ENCODE measurements at regions of chr11 and their contacts with region 1.

Region 1: GRCh38 chr11:96342961-96343711 is at the start of gene MAML2:
- DNase-seq: peak; percentile 95
- ATAC-seq: peak; percentile 83
- H3K4me3 Mint-ChIP-seq: peak within 1 kb of the TSS; percentile 91
- H3K27ac Mint-ChIP-seq: peak within 1 kb of the TSS; percentile 95
- H3K4me1 Mint-ChIP-seq: peaks cover 31% of the 10 kb centered on the region
- H3K27me3 Mint-ChIP-seq: no peaks in the 10 kb centered on the region
- total RNA-seq, gene MAML2: 14.7 to 15.5 TPM

Region 2: GRCh38 chr11:95835768-95836488 is 507.2 kb before region 1 on chr11:
- CTCF ChIA-PET with region 1: interaction called, 54 read pairs
- POLR2A ChIA-PET with region 1: no interaction called
- DNase-seq: peak; percentile 65
- ATAC-seq: peak; percentile 78
- H3K4me3 Mint-ChIP-seq: no peak overlapping the region
- H3K27ac Mint-ChIP-seq: no peak overlapping the region
- H3K4me1 Mint-ChIP-seq: no peaks in the 10 kb centered on the region
- H3K27me3 Mint-ChIP-seq: no peaks in the 10 kb centered on the region

Region 3: GRCh38 chr11:96082002-96082899 is 260.9 kb before region 1 on chr11:
- CTCF ChIA-PET with region 1: interaction called, 13 read pairs
- POLR2A ChIA-PET with region 1: no interaction called
- DNase-seq: no peak
- ATAC-seq: no peak
- H3K4me3 Mint-ChIP-seq: no peak overlapping the region
- H3K27ac Mint-ChIP-seq: no peak overlapping the region
- H3K4me1 Mint-ChIP-seq: peaks cover 6% of the 10 kb centered on the region
- H3K27me3 Mint-ChIP-seq: no peaks in the 10 kb centered on the region

Region 4: DNA sequence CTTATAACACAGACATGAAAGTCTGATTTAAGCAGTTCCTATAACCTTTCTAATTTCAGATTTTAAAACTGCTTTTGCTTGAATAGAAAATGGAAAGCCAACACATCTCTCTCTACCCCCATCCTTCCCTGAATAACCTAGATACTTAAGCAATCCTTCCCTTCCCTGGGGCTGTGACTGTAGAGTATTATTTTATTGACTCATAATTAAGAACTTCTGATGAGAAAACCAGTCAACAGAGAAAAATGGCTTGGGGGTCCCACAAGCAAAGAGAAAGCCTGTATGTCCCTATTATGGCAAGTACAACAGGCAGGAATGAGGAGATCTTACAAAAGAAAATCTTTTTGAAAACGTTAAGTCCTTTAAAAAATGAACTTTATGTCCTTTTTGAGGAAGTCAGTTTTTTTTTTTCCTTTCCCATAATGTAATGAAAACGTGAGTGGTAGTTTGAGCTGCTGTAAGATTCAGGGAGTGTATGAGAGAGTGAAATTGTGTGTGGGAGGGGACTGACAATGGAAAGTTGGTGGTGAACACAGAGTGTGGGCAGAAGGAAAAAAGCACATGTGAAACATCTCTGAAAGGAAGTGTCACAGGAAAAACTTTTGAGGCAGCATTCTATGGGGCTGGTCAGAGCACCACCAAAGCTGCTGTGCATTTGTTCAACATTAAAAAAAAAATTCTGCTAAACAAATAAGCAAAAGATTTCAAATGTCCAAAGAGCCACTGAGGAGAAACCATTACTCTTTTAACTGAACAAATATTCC is 154.7 kb before region 1 on chr11:
- CTCF ChIA-PET with region 1: interaction called, 24 read pairs
- POLR2A ChIA-PET with region 1: interaction called, 4 read pairs
- DNase-seq: no peak
- ATAC-seq: peak; percentile 77
- H3K4me3 Mint-ChIP-seq: no peak overlapping the region
- H3K27ac Mint-ChIP-seq: peak overlapping the region; percentile 31
- H3K4me1 Mint-ChIP-seq: peaks cover 42% of the 10 kb centered on the region
- H3K27me3 Mint-ChIP-seq: no peaks in the 10 kb centered on the region

Region 5: DNA sequence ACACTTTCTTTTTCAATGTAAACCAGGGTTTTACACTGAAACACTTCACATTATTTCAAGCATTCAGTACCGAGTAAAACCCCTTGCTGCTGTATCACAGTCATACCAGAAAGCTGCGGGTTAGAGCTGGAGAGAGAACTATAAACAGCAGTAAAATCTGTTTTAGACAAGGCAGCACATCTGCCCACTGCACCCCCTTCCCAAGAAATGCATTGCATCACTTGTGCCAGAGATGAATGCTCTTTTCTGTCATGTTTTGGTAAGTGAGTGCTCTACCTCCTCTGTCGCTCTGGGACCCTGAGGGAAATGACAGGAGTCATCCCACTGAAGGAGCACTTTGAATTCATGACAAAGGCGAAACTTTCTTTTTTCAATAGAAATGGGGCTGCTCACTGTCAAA is 107.4 kb before region 1 on chr11:
- CTCF ChIA-PET with region 1: interaction called, 92 read pairs
- POLR2A ChIA-PET with region 1: interaction called, 7 read pairs
- DNase-seq: peak; percentile 47
- ATAC-seq: peak; percentile 77
- H3K4me3 Mint-ChIP-seq: no peak overlapping the region
- H3K27ac Mint-ChIP-seq: peak overlapping the region; percentile 58
- H3K4me1 Mint-ChIP-seq: peaks cover 27% of the 10 kb centered on the region
- H3K27me3 Mint-ChIP-seq: no peaks in the 10 kb centered on the region

Region 6: GRCh38 chr11:96293598-96294021 is 49.5 kb before region 1 on chr11:
- CTCF ChIA-PET with region 1: interaction called, 62 read pairs
- POLR2A ChIA-PET with region 1: interaction called, 7 read pairs
- DNase-seq: peak; percentile 38
- ATAC-seq: peak; percentile 87
- H3K4me3 Mint-ChIP-seq: peak overlapping the region; percentile 29
- H3K27ac Mint-ChIP-seq: peak overlapping the region; percentile 31
- H3K4me1 Mint-ChIP-seq: peaks cover 59% of the 10 kb centered on the region
- H3K27me3 Mint-ChIP-seq: no peaks in the 10 kb centered on the region

Region 7: DNA sequence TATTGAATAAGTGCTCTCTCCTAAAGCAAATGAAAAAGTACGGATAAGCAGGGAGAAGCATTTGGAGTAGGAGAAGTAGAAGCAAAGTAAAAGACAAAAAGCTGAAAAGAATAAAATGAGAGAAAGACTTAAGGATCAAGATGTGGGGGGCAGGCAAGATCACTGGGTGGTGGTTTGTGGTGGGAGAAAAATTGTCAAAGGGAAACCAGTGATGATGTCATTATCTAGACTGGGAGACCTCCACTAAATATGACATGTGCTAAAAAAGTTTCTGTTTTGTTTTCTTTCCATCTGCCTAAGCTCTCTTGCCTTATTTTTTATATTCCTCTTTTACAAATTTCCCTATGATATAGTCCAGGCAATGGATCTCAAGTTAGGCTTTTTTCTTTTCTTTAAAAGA is 14.7 kb after region 1 on chr11:
- CTCF ChIA-PET with region 1: interaction called, 18 read pairs
- POLR2A ChIA-PET with region 1: no interaction called
- DNase-seq: peak; percentile 40
- ATAC-seq: peak; percentile 87
- H3K4me3 Mint-ChIP-seq: peak overlapping the region; percentile 43
- H3K27ac Mint-ChIP-seq: peak overlapping the region; percentile 13
- H3K4me1 Mint-ChIP-seq: peaks cover 25% of the 10 kb centered on the region
- H3K27me3 Mint-ChIP-seq: no peaks in the 10 kb centered on the region